Mammary epithelial cell (primary cell): ENCODE measurements at regions of chr4 and their contacts with region 1.

Region 1: DNA sequence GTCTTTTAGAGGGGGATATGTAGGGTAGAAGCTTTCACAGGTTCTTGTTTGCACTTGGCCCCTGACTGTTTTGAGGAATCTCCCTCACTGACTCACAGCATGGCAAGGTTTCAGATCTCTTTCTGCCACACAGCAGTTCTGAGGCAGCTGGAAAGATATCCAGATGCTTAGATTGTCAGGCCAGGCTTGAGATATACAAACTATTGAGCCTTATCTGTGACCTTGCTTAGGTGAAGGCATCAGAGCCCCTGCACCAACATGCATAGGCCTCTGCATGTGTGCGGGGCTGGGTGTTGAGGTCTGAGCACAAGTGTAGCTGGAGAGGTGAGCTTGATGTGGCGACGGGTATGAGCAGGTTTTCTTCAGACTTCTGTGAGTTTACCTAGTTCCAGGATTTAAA is 80.9 kb upstream of the MSANTD1 start:
- DNase-seq: peak; percentile 30
- H3K4me3 ChIP-seq: no peak overlapping the region
- H3K27ac ChIP-seq: no peak overlapping the region
- H3K4me1 ChIP-seq: no peaks in the 10 kb centered on the region
- H3K27me3 ChIP-seq: no peaks in the 10 kb centered on the region
- CTCF ChIP-seq: no peak

Region 2: GRCh38 chr4:3226467-3226866 is 58.4 kb after region 1 on chr4:
- CTCF ChIA-PET with region 1: no interaction called
- dilution Hi-C with region 1: loop called (anchors 5 kb)
- in situ Hi-C with region 1: no loop called
- intact Hi-C with region 1: no loop called
- DNase-seq: no peak
- H3K4me3 ChIP-seq: no peak overlapping the region
- H3K27ac ChIP-seq: no peak overlapping the region
- H3K4me1 ChIP-seq: no peaks in the 10 kb centered on the region
- H3K27me3 ChIP-seq: no peaks in the 10 kb centered on the region
- CTCF ChIP-seq: no peak

Region 3: GRCh38 chr4:3285558-3286334 is 117.7 kb after region 1 on chr4:
- CTCF ChIA-PET with region 1: no interaction called
- dilution Hi-C with region 1: no loop called
- in situ Hi-C with region 1: no loop called
- intact Hi-C with region 1: no loop called
- DNase-seq: peak; percentile 80
- H3K4me3 ChIP-seq: peak overlapping the region in 2 of 3 experiments; percentile 2 to 15
- H3K27ac ChIP-seq: no peak overlapping the region
- H3K4me1 ChIP-seq: peaks cover 16% of the 10 kb centered on the region
- H3K27me3 ChIP-seq: no peaks in the 10 kb centered on the region
- CTCF ChIP-seq: no peak